Dendritic cell treated with granulocyte-macrophage colony-stimulating factor and Interleukin-4, amounts not matched to agents 40 ng/mL and 50 ng/mL, for 4 days (primary cell): ENCODE measurements at regions of chr13 and their contacts with region 1.

Region 1: GRCh38 chr13:52809310-52809769 is 39.1 kb downstream of the PCDH8 start:
- H3K4me3 Mint-ChIP-seq: no peak overlapping the region
- H3K27ac Mint-ChIP-seq: no peak overlapping the region
- H3K4me1 Mint-ChIP-seq: no peaks in the 10 kb centered on the region
- H3K27me3 Mint-ChIP-seq: peaks cover 13% of the 10 kb centered on the region

Region 2: DNA sequence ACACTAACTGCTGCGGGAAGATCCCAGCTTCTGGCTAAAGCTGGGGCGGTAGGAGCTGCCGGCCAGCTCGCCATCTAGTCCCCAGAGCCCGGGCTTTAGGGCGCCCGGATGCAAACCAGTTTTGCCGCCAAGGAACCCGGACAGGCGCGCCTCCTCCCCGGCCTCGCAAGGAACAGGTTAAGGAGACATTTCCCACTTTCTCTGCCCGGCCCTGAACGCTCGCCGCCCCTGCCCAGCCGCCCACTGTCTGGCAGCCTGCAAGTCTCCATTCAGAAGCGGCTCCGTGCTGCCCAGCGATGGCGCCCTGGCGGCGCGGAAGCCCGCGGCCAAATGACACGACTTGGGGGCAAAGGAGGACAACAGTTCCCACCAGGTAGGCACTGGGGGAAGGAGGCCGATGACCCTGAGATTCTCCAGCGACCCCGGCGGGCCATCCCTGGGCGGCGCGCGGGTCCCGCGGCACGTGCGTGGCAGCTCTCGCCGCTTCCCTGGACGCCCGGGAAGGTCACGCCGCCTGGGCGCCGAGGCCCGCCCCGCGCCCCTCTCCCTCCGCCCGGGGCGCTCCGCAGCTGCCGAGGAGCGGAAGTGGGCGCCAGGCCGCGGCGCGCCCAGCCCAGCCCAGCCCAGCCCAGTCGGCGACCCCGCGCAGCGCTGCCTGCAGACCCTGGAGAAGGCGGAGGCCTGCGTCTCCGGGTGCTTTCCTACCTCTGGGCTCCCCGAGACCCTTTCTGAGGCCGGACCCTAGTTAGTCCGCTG is 209.3 kb before region 1 on chr13:
- intact Hi-C with region 1: no loop called
- H3K4me3 Mint-ChIP-seq: peak overlapping the region; percentile 75
- H3K27ac Mint-ChIP-seq: no peak overlapping the region
- H3K4me1 Mint-ChIP-seq: no peaks in the 10 kb centered on the region
- H3K27me3 Mint-ChIP-seq: peaks cover 26% of the 10 kb centered on the region

Region 3: DNA sequence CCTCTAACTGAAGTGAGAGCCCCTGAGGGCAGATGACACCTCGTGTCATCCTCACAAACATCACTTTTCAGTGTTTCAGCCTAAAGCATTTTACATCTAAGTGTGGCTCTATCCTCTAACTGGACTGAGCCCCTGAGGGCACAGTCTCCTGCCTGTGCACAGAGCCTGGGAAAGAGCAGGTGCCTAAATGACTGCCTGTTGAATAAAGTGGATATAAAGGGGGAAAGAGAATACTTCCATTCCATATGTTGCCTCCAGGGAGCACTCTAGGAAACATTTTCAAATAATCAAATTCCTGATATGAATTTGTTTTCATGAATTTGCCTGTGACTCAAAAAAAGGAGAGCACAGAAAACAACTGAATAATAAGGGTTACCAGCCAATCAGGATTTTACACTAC is 102.0 kb before region 1 on chr13:
- intact Hi-C with region 1: loop called (anchors 5 kb)
- H3K4me3 Mint-ChIP-seq: no peak overlapping the region
- H3K27ac Mint-ChIP-seq: no peak overlapping the region
- H3K4me1 Mint-ChIP-seq: peaks cover 5% of the 10 kb centered on the region
- H3K27me3 Mint-ChIP-seq: no peaks in the 10 kb centered on the region

Region 4: GRCh38 chr13:52760077-52760476 is 49.3 kb before region 1 on chr13:
- intact Hi-C with region 1: no loop called
- H3K4me3 Mint-ChIP-seq: no peak overlapping the region
- H3K27ac Mint-ChIP-seq: no peak overlapping the region
- H3K4me1 Mint-ChIP-seq: no peaks in the 10 kb centered on the region
- H3K27me3 Mint-ChIP-seq: peaks cover 2% of the 10 kb centered on the region